Activated naive CD4-positive, alpha-beta T cell treated with anti-CD3 and anti-CD28 coated beads for 36 hours (primary cell): ENCODE measurements at regions of chr3 and their contacts with region 1.

Region 1: DNA sequence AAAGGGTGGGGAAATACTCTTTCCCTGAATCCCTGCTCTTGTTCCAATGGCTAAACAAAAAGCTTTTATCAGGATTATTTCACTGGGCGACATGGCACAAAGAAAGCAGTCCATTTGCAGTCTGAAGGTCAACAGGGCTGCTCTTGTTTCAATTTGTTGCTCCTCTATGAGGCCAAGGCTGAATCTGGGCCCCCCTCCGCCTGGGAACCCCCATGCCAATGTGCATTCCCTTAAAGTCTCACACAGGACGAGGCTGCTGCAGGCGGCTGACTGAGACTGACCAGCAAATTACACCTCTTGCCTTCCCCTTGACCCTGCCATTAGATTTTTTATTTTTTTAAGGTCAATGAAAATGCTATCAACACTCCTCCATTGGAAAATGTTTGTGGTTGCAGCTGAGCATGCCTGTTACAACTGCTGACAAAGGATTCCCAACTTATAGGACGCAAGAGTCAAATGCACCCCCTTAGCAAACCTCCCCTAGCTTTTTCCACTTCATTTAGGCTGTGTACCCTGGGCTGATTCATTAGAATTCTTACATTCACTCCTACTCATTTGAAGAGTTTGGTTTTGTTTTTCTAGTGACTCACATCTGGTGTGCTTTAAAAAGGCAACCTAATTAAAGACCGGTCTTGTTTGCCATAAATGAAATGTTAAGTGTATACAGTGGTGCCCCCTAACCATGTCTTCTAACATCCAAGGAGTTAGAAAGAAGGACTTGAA is 60.8 kb upstream of the ARHGEF3 start:
- DNase-seq: peak; percentile 46
- H3K4me3 Mint-ChIP-seq: no peak overlapping the region
- H3K27ac Mint-ChIP-seq: peak overlapping the region; percentile 76
- H3K4me1 Mint-ChIP-seq: peaks cover 73% of the 10 kb centered on the region
- H3K27me3 Mint-ChIP-seq: no peaks in the 10 kb centered on the region

Region 2: DNA sequence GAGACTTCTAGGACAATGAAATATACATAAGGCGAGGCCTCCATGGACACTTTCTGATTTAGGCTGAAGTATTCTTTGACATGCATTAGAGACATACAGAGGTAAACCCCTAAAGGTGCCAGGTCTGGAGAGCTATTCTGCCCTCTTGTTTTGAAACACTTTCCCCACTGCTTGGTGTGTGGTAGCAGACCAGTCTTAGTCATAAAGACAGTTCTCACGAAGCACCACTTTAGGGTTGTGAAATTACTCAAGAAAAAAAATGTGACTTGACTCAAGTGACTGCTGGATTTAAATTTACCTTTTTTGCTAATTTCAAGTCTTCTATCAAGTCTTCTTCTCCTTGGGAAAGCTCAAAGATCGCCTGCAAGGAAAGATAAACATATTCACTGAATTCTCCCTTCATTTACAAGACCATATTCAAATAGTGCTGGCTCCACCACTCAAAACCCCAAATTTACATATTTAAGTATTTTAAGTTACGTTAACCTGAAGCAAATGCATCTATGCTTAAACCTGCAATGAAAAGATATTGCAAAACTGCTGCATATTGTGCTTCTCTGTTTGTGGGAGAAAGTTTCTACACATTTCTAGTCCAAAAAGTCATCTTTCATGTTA is 109.2 kb before region 1 on chr3:
- CTCF ChIA-PET with region 1: no interaction called
- intact Hi-C with region 1: loop called (anchors 1 kb)
- DNase-seq: peak; percentile 73
- H3K4me3 Mint-ChIP-seq: no peak overlapping the region
- H3K27ac Mint-ChIP-seq: peak overlapping the region; percentile 44
- H3K4me1 Mint-ChIP-seq: peaks cover 56% of the 10 kb centered on the region
- H3K27me3 Mint-ChIP-seq: no peaks in the 10 kb centered on the region

Region 3: DNA sequence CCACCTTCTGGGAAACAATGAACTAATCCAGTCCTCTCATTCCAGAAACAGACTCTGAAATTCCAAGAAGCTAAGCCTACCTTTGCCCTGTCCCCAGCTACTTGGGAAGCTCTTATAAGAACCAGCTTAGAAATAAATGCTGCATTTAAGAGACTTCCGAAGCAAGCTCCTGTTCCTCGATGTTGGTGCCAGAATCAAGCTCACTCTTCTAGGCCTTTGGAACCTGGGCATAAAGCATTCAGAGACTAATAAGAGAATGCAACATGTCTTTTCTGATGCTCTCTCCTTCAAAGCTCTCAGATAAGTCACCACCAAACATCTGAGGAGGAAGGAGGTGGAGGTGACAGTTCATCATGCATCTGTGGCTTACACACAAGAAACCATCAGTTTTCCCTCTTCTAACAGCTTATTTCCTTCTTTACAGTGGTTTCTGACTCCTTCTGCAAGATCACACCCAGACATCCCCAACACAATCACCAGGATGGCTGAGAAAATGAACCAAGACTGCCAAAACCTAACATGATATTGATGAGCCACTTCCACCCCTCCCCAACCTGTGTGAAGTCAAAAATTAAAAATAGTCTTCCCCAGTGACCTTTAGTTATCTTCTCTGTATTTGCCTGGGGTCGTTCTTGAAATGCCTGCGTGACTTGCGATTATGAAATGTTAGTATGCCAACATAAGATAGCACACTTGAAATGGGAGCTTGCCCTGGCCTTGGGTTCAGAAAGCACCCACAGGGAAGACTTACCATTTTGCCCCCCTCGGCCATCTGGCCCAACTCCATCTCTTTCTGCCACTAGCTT is 72.3 kb before region 1 on chr3:
- CTCF ChIA-PET with region 1: interaction called, 3 read pairs
- intact Hi-C with region 1: loop called (anchors 1 kb)
- DNase-seq: peak; percentile 57
- H3K4me3 Mint-ChIP-seq: peak overlapping the region; percentile 19
- H3K27ac Mint-ChIP-seq: peak overlapping the region; percentile 98
- H3K4me1 Mint-ChIP-seq: peaks cover 84% of the 10 kb centered on the region
- H3K27me3 Mint-ChIP-seq: no peaks in the 10 kb centered on the region

Region 4: GRCh38 chr3:56894881-56895431 is 32.4 kb after region 1 on chr3:
- CTCF ChIA-PET with region 1: interaction called, 3 read pairs
- intact Hi-C with region 1: loop called (anchors 1 kb)
- DNase-seq: peak; percentile 60
- H3K4me3 Mint-ChIP-seq: peak overlapping the region; percentile 12
- H3K27ac Mint-ChIP-seq: peak overlapping the region; percentile 30
- H3K4me1 Mint-ChIP-seq: peaks cover 68% of the 10 kb centered on the region
- H3K27me3 Mint-ChIP-seq: no peaks in the 10 kb centered on the region

Region 5: GRCh38 chr3:56980798-56981390 is 118.4 kb after region 1 on chr3:
- CTCF ChIA-PET with region 1: interaction called, 5 read pairs
- intact Hi-C with region 1: loop called (anchors 1 kb)
- DNase-seq: peak; percentile 82
- H3K4me3 Mint-ChIP-seq: no peak overlapping the region
- H3K27ac Mint-ChIP-seq: peak overlapping the region; percentile 65
- H3K4me1 Mint-ChIP-seq: peaks cover 25% of the 10 kb centered on the region
- H3K27me3 Mint-ChIP-seq: no peaks in the 10 kb centered on the region

Region 6: GRCh38 chr3:58452176-58452575 is 1589.7 kb after region 1 on chr3:
- CTCF ChIA-PET with region 1: no interaction called
- intact Hi-C with region 1: no loop called
- DNase-seq: no peak
- H3K4me3 Mint-ChIP-seq: no peak overlapping the region
- H3K27ac Mint-ChIP-seq: no peak overlapping the region
- H3K4me1 Mint-ChIP-seq: no peaks in the 10 kb centered on the region
- H3K27me3 Mint-ChIP-seq: no peaks in the 10 kb centered on the region